ENCODE measurements at regions of chr14 and their contacts with region 1.

Region 1: DNA sequence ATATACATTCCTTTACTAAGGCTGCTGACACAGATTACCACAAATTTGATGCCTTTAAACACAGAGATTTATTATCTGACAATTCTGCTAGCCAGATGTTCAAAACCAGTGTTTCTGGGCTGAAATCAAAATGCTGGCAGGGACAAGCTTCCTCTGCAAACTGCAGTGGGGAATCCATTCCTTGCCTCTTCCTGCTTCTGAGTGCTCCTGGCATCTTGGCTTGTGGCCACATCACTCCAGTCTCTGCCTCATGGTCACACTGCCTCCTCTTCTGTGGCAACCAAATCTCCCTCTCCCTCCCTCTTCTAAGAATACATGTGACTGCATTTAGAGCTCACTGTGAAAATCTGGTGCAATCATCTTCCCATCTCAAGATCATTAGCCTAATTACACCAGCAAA is 235.7 kb downstream of the TTC8 start:
- DNase-seq: no peak
- ATAC-seq: no peak
- H3K4me3 ChIP-seq: no peak overlapping the region
- H3K27ac ChIP-seq: no peak overlapping the region
- H3K4me1 ChIP-seq: no peaks in the 10 kb centered on the region
- H3K27me3 ChIP-seq: no peaks in the 10 kb centered on the region
- CTCF ChIP-seq: no peak

Region 2: GRCh38 chr14:89078021-89078795 is 18.0 kb after region 1 on chr14:
- CTCF ChIA-PET with region 1: no interaction called
- POLR2A ChIA-PET with region 1: no interaction called
- in situ Hi-C with region 1: no loop called
- intact Hi-C with region 1: loop called (anchors 2 kb)
- DNase-seq: no peak
- ATAC-seq: no peak
- H3K4me3 ChIP-seq: no peak overlapping the region
- H3K27ac ChIP-seq: no peak overlapping the region
- H3K4me1 ChIP-seq: no peaks in the 10 kb centered on the region
- H3K27me3 ChIP-seq: 0 out of 2 replicates have a peak, but pooled peaks cover 3% of the 10 kb centered on the region
- CTCF ChIP-seq: no peak